ENCODE measurements at regions of chr17 and their contacts with region 1.

Region 1: DNA sequence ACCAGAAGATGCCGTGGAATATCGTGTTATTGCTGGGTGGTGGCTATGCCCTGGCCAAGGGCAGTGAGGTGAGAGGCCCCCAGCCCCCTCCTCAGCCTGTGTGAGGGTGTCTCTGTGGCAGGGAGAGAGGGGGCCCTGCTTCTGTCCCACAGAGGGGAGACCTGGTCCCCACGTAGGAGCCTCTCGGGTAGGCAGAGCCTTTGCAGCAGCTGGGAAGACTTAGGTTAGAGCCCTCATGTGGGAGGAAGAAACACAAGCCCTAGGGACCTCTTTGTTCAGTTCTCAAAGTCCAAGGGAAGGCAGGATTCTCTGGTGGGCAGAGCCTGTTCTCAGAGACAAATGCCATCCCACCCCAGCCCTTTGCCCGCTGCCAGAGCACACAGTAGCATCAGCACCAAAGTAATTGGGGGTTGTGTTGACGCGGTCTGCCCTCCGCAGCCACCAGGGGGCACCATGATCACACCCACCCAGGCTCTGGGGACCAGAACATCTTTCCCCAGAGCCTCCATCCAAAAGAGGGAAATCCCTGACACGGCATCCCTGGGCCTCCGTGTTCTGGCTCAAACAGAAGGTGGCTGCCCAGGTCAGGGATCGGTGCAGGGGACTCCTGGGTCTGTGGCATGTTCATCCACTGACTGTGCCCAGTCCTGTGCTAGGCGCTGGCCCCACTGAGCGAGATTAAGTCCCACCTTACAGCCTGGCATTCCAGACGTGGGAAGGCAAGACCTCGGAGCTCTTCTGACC is 11.5 kb upstream of the FOXN1 start:
- H3K4me3 Mint-ChIP-seq: no peak overlapping the region
- H3K27ac Mint-ChIP-seq: no peak overlapping the region
- H3K4me1 Mint-ChIP-seq: no peaks in the 10 kb centered on the region
- H3K27me3 Mint-ChIP-seq: peaks cover 23% of the 10 kb centered on the region

Region 2: GRCh38 chr17:28540231-28540630 is 45.6 kb after region 1 on chr17:
- intact Hi-C with region 1: loop called (anchors 1 kb)
- H3K4me3 Mint-ChIP-seq: no peak overlapping the region
- H3K27ac Mint-ChIP-seq: no peak overlapping the region
- H3K4me1 Mint-ChIP-seq: no peaks in the 10 kb centered on the region
- H3K27me3 Mint-ChIP-seq: peaks cover 7% of the 10 kb centered on the region